Gastrocnemius medialis (tissue), 4 donors: ENCODE measurements at regions of chr12 and their contacts with region 1.

Region 1: DNA sequence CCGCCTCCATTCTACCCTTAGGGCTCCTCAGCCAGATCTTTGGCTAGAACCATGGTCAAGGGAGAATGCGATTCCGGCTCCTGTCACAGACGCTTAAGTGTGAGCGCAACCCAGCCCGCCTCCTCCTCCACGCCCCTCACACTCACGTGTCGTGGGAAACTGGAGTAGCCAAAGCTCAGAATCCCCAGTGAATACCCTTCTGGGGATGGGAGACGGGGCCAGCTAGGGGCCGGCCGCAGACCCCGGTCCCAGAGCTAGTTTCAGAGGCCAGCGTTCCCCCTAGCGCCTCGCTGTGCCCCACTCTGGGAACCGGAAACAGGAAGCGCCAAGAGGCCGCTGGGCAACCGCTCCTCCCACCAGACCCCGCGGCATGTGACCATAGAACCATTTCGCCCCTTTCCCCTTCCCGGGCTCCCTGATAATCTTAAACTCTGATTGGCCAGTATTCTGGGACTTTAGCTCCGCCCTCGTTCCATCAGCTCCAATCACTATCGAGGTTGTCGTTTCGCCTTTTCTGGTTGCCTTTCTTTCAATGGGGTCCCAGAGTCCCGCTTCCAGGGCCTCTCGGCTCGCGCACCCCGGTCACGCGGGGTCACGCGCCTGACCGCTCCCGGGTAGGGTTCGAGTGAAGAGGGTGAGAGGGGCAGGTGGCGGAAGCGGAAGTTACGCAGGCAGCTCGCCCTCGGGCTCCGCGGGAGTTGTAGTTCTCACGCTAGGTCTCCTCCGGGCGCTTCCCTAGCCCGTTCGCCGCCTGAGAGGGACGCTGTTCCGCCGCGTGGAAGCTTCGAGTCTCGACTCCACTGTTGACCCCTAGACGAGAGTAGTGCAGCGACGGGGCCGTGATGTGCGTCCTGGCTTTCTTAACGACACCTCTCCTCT is at the start of gene M6PR:
- DNase-seq: peak; percentile 91 to 92
- ATAC-seq: peak; percentile 98
- H3K4me3 ChIP-seq: peak within 1 kb of the TSS; percentile 62 to 100 (median 92)
- H3K27ac ChIP-seq: peak within 1 kb of the TSS; percentile 91 to 100 (median 97)
- H3K4me1 ChIP-seq: peaks cover 23 to 31% of the 10 kb centered on the region in 2 donors
- H3K27me3 ChIP-seq: no peaks in the 10 kb centered on the region
- CTCF ChIP-seq: peak; percentile 28 to 74 (median 36)
- POLR2A ChIP-seq: peak; percentile 87 to 90
- total RNA-seq, gene M6PR: 46.6 to 75.3 (median 66.0) TPM

Region 2: GRCh38 chr12:8065991-8066594 is 883.5 kb before region 1 on chr12 and contains the start of gene C3AR1:
- in situ Hi-C with region 1: loop called in 1 of 4 experiments (anchors 25 kb)
- intact Hi-C with region 1: no loop called
- DNase-seq: no peak
- ATAC-seq: peak; percentile 36 to 39
- H3K4me3 ChIP-seq: peak within 1 kb of the TSS in 1 of 4 donors; percentile 30
- H3K27ac ChIP-seq: no peak within 1 kb of the TSS
- H3K4me1 ChIP-seq: no peaks in the 10 kb centered on the region
- H3K27me3 ChIP-seq: no peaks in the 10 kb centered on the region
- CTCF ChIP-seq: no peak
- POLR2A ChIP-seq: peak; percentile 24 to 34
- total RNA-seq, gene C3AR1: 0.95 to 4.7 (median 2.4) TPM

Region 3: GRCh38 chr12:8697476-8698131 is 252.0 kb before region 1 on chr12 and contains the start of gene RIMKLB:
- in situ Hi-C with region 1: no loop called
- intact Hi-C with region 1: loop called (anchors 2 kb)
- DNase-seq: peak; percentile 46 to 64
- ATAC-seq: peak; percentile 81 to 86
- H3K4me3 ChIP-seq: peak within 1 kb of the TSS; percentile 81 to 97 (median 88)
- H3K27ac ChIP-seq: peak within 1 kb of the TSS; percentile 89 to 94 (median 90)
- H3K4me1 ChIP-seq: peaks cover 14 to 21% of the 10 kb centered on the region in 2 donors
- H3K27me3 ChIP-seq: no peaks in the 10 kb centered on the region
- CTCF ChIP-seq: no peak
- POLR2A ChIP-seq: peak; percentile 79 to 81
- total RNA-seq, gene RIMKLB: 6.9 to 13.7 (median 11.5) TPM

Region 4: GRCh38 chr12:8914716-8915526 is 34.7 kb before region 1 on chr12:
- in situ Hi-C with region 1: no loop called
- intact Hi-C with region 1: loop called (anchors 1 kb)
- DNase-seq: peak in 1 of 2 donors; percentile 5
- ATAC-seq: peak; percentile 67
- H3K4me3 ChIP-seq: peak overlapping the region; percentile 65 to 80 (median 74)
- H3K27ac ChIP-seq: peak overlapping the region; percentile 62 to 79 (median 65)
- H3K4me1 ChIP-seq: peaks cover 7 to 13% of the 10 kb centered on the region in 2 donors
- H3K27me3 ChIP-seq: no peaks in the 10 kb centered on the region
- CTCF ChIP-seq: no peak
- POLR2A ChIP-seq: no peak

Region 5: DNA sequence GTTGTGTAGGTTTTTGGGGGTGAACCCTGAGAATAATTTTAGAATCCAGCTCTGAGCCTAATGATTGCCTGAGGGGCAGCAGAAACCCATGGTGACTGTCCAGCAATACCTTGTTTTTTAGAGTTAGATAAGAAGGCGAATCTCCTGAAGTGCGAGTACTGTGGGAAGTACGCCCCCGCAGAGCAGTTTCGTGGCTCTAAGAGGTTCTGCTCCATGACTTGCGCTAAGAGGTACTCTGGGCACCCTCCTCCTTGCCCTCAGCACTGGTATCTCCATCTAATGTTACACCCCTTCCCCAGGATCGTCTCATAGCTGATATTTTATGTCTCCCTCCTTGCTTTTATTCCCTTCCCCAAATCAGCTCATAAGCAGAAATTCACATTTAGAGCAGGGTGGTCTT is 12.8 kb before region 1 on chr12:
- in situ Hi-C with region 1: no loop called
- intact Hi-C with region 1: no loop called
- DNase-seq: no peak
- ATAC-seq: no peak
- H3K4me3 ChIP-seq: no peak overlapping the region
- H3K27ac ChIP-seq: no peak overlapping the region
- H3K4me1 ChIP-seq: no peaks in the 10 kb centered on the region
- H3K27me3 ChIP-seq: no peaks in the 10 kb centered on the region
- CTCF ChIP-seq: no peak
- POLR2A ChIP-seq: no peak

Region 6: GRCh38 chr12:9039397-9039977 is 89.9 kb after region 1 on chr12:
- in situ Hi-C with region 1: loop called in 2 of 4 experiments (anchors 5 to 10 kb)
- intact Hi-C with region 1: loop called (anchors 1 kb)
- DNase-seq: no peak
- ATAC-seq: peak; percentile 54 to 68
- H3K4me3 ChIP-seq: no peak overlapping the region
- H3K27ac ChIP-seq: no peak overlapping the region
- H3K4me1 ChIP-seq: peaks cover 0 to 17% of the 10 kb centered on the region in 2 donors
- H3K27me3 ChIP-seq: no peaks in the 10 kb centered on the region
- CTCF ChIP-seq: peak; percentile 43 to 73 (median 62)
- POLR2A ChIP-seq: no peak

Region 7: GRCh38 chr12:9049520-9050133 is 100.0 kb after region 1 on chr12:
- in situ Hi-C with region 1: loop called in 3 of 4 experiments (anchors 5 to 10 kb)
- intact Hi-C with region 1: no loop called
- DNase-seq: no peak
- ATAC-seq: peak; percentile 58 to 62
- H3K4me3 ChIP-seq: no peak overlapping the region
- H3K27ac ChIP-seq: no peak overlapping the region
- H3K4me1 ChIP-seq: no peaks in the 10 kb centered on the region
- H3K27me3 ChIP-seq: no peaks in the 10 kb centered on the region
- CTCF ChIP-seq: peak in 4 of 5 experiments; percentile 30 to 53 (median 39)
- POLR2A ChIP-seq: no peak

Region 8: DNA sequence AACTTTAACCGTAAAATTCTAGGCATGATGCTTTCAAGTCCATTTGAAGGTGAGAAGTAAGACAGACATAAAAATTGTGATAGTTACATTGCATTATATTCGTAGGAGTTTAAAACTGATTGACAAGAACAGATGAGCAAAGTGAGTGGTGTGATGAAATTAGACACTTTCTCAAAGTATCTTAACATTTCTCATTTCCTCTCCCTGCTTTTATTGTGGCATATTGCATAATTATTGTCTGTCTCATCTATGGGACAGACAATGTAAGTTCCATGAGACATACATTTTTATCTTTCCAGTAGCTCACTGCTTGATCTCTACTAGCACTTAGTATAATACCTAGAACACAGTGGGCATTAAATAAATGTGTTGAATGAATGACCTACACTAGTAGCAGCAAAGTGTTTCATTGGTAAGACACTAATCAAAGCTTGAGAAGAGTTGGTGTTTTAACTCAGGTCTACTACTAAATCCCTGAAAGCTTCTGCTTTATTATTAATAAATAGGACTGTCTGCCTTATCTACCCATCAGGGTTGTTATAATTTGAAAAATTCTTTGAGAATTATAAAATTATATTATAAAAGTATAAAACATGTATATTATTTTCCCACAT is 147.1 kb after region 1 on chr12:
- in situ Hi-C with region 1: no loop called
- intact Hi-C with region 1: no loop called
- DNase-seq: no peak
- ATAC-seq: no peak
- H3K4me3 ChIP-seq: no peak overlapping the region
- H3K27ac ChIP-seq: no peak overlapping the region
- H3K4me1 ChIP-seq: no peaks in the 10 kb centered on the region
- H3K27me3 ChIP-seq: no peaks in the 10 kb centered on the region
- CTCF ChIP-seq: no peak
- POLR2A ChIP-seq: no peak

Region 9: GRCh38 chr12:9340422-9341259 is 391.1 kb after region 1 on chr12:
- in situ Hi-C with region 1: no loop called
- intact Hi-C with region 1: no loop called
- DNase-seq: no peak
- ATAC-seq: no peak
- H3K4me3 ChIP-seq: no peak overlapping the region
- H3K27ac ChIP-seq: no peak overlapping the region
- H3K4me1 ChIP-seq: no peaks in the 10 kb centered on the region
- H3K27me3 ChIP-seq: no peaks in the 10 kb centered on the region
- CTCF ChIP-seq: no peak
- POLR2A ChIP-seq: no peak